ENCODE measurements at regions of chr15 and their contacts with region 1.

Region 1: GRCh38 chr15:30073915-30074314 is 8.8 kb upstream of the GOLGA8J start:
- DNase-seq: no peak
- ATAC-seq: no peak
- H3K4me3 ChIP-seq: no peak overlapping the region
- H3K27ac ChIP-seq: no peak overlapping the region
- H3K4me1 ChIP-seq: no peaks in the 10 kb centered on the region
- H3K27me3 ChIP-seq: 0 out of 2 replicates have a peak, but pooled peaks cover 4% of the 10 kb centered on the region
- CTCF ChIP-seq: no peak

Region 2: DNA sequence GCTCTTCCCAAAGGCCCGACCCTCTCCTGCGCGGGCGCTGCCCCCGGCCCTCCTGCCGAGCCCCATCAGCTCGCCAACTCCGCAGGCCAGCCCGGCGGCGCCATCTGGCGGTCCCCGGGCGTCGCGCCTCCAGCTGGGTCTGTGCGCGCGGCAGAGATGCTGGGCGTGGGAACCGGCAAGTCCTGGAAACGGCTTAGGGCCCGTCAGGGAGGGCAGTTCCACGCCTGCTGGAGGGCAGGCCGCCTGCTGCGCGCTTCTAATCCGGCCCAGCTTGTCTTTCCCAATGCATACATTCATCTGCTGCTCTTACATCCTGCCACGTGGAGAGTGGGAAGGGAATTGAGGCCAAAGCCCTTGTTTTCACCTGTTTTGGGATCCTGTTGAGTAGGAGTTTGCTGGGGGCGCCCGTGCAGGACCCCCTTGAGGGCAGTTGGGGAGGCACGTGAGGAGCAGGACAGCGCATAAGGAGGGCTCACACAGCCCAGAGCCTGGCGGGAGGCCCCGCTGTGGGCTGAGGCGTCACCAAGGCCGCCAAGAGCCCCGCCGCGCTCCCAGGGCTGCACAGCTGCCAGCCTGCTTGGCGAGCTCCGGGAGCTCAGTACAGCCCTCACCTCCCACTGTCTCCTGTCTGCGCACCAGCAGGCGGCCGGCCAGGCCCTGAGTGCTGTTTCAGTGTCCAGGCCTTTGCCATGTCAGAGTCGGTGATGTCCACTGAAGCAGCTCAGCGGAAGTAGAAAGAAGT is 969.9 kb before region 1 on chr15:
- CTCF ChIA-PET with region 1: interaction called, 11 read pairs
- POLR2A ChIA-PET with region 1: no interaction called
- intact Hi-C with region 1: no loop called
- DNase-seq: peak; percentile 43
- ATAC-seq: peak; percentile 78
- H3K4me3 ChIP-seq: no peak overlapping the region
- H3K27ac ChIP-seq: no peak overlapping the region
- H3K4me1 ChIP-seq: no peaks in the 10 kb centered on the region
- H3K27me3 ChIP-seq: no peaks in the 10 kb centered on the region
- CTCF ChIP-seq: peak; percentile 59

Region 3: GRCh38 chr15:29871401-29871800 is 202.5 kb before region 1 on chr15:
- CTCF ChIA-PET with region 1: no interaction called
- POLR2A ChIA-PET with region 1: no interaction called
- intact Hi-C with region 1: no loop called
- DNase-seq: no peak
- ATAC-seq: no peak
- H3K4me3 ChIP-seq: no peak overlapping the region
- H3K27ac ChIP-seq: no peak overlapping the region
- H3K4me1 ChIP-seq: no peaks in the 10 kb centered on the region
- H3K27me3 ChIP-seq: no peaks in the 10 kb centered on the region
- CTCF ChIP-seq: no peak

Region 4: DNA sequence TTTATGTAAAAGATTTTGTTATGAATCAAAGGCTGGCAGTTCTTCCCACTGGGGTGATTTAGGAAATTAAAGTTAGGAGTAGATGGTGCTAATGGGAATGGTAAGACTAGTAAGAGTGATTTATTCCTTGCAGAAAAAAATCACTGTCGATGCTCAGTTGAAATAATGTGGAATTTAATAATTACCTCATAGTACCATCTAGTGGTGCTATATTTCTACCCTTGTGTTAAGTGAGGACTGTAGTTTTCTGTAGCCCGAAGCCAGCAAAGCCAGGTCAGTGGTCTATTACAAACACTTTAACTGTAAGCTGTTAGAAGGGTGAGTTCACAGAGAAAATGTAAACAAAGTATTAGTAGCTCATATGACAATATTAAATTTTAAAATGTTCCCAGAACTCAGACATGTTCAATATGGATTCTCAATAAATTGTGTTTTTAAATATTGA is 30.7 kb before region 1 on chr15:
- CTCF ChIA-PET with region 1: interaction called, 4 read pairs
- POLR2A ChIA-PET with region 1: no interaction called
- intact Hi-C with region 1: loop called (anchors 1 kb)
- DNase-seq: peak; percentile 62
- ATAC-seq: peak; percentile 75
- H3K4me3 ChIP-seq: no peak overlapping the region
- H3K27ac ChIP-seq: no peak overlapping the region
- H3K4me1 ChIP-seq: no peaks in the 10 kb centered on the region
- H3K27me3 ChIP-seq: no peaks in the 10 kb centered on the region
- CTCF ChIP-seq: peak; percentile 67

Measured in PC-3 (cell line).